ENCODE measurements at regions of chr1 and their contacts with region 1.

Region 1: GRCh38 chr1:25338188-25338981 is at the start of gene TMEM50A:
- DNase-seq: peak; percentile 83 to 90 (median 89)
- H3K4me3 ChIP-seq: peak within 1 kb of the TSS; percentile 60 to 98 (median 91)
- H3K27ac ChIP-seq: peak within 1 kb of the TSS; percentile 58 to 99 (median 97)
- H3K27me3 ChIP-seq: no peaks in the 10 kb centered on the region
- CTCF ChIP-seq: peak in 5 of 56 donors; percentile 3 to 16 (median 11)
- total RNA-seq, gene TMEM50A: 45.9 to 98.2 (median 68.2) TPM

Region 2: DNA sequence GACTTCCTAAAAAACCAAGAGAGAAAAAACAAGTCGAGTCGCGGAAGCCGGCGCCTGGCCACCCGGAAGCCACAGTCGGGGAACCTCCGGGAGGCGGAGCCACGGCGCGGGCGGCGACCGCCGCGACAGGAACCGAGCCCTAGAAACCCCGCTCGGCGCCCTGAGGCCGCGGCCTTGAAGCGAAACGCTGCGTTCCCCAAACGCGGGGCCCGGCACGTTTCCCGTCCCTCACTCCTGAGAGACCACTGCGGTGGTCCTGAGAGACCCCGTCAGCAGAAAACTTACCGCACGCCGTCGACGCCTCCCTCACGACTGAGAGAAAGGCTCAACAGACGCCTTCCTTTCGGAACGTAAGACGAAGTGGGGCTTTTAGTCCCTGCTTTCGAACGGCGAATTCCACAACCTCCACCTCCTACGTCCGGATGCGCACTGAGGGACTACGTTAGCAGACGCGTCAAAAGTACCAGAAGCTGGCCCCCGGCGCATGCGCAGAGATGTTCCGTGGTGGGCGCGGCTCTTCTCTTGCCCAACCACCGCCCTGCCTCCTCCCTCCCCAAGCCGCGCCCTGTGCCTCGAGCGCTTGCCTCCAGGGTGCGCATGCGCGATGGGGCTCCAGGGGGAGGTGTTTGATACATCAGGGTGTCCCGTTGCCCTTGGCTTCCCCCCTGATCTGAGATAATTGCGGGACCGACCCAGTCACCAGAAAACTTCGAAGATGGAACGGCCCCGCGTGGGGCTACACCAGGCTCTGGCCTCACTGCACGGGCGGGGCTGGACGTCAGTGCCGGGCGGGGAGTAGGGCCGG is 91.2 kb before region 1 on chr1 and contains the start of gene RSRP1:
- intact Hi-C with region 1: loop called (anchors 2 to 10 kb)
- DNase-seq: peak; percentile 99 to 100 (median 99)
- H3K4me3 ChIP-seq: peak within 1 kb of the TSS; percentile 72 to 100 (median 97)
- H3K27ac ChIP-seq: peak within 1 kb of the TSS; percentile 86 to 100 (median 100)
- H3K27me3 ChIP-seq: no peaks in the 10 kb centered on the region
- CTCF ChIP-seq: peak in 27 of 56 donors; percentile 2 to 49 (median 29)
- total RNA-seq, gene RSRP1: 87.8 to 261 (median 154) TPM

Region 3: DNA sequence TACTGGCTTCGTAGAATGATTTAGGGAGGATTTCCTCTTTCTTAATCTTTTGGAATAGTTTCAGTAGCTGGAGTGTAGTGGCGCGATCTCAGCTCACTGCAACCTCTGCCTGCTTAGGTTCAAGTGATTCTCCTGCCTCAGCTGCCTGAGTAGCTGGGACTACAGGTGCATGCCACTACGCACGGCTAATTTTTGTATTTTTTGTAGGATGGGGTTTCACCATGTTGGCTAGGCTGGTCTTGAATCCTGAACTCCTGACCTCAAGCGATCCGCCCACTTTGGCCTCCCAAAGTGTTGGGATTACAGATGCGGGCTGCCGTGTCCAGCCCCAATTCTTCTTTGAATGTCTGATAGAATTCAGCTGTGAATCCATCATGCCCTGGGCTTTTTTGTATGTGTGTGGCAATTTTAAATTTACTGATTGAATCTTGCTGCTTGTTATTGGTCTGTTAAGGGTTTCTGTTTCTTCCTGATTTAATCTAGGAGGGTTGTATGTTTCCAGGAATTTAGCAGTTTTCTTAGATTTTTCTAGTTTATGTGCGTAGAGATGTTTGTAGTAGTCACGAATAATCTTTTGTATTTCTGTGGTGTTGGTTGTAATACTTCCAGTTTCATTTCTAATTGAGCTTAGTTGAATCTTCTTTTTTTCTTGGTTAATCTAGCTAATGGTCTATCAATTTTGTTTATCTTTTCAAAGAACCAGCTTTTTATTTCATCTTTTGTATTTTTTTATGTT is 293.5 kb after region 1 on chr1:
- intact Hi-C with region 1: no loop called
- DNase-seq: no peak
- H3K4me3 ChIP-seq: peak overlapping the region in 28 of 59 donors; percentile 1 to 44 (median 21)
- H3K27ac ChIP-seq: peak overlapping the region in 14 of 59 donors; percentile 4 to 42 (median 17)
- H3K27me3 ChIP-seq: no peaks in the 10 kb centered on the region
- CTCF ChIP-seq: no peak